ENCODE measurements at regions of chr13 and their contacts with region 1.

Region 1: GRCh38 chr13:46603165-46603603 is 50.2 kb downstream of the LRCH1 start:
- DNase-seq: no peak
- ATAC-seq: no peak
- H3K4me3 Mint-ChIP-seq: no peak overlapping the region
- H3K27ac Mint-ChIP-seq: no peak overlapping the region
- H3K4me1 Mint-ChIP-seq: peaks cover 92% of the 10 kb centered on the region
- H3K27me3 Mint-ChIP-seq: no peaks in the 10 kb centered on the region
- CTCF ChIP-seq: no peak

Region 2: GRCh38 chr13:46614582-46614981 is 11.4 kb after region 1 on chr13:
- CTCF ChIA-PET with region 1: no interaction called
- POLR2A ChIA-PET with region 1: interaction called, 5 read pairs
- intact Hi-C with region 1: loop called (anchors 1 kb)
- DNase-seq: no peak
- ATAC-seq: no peak
- H3K4me3 Mint-ChIP-seq: no peak overlapping the region
- H3K27ac Mint-ChIP-seq: no peak overlapping the region
- H3K4me1 Mint-ChIP-seq: peaks cover 86% of the 10 kb centered on the region
- H3K27me3 Mint-ChIP-seq: no peaks in the 10 kb centered on the region
- CTCF ChIP-seq: no peak

Region 3: DNA sequence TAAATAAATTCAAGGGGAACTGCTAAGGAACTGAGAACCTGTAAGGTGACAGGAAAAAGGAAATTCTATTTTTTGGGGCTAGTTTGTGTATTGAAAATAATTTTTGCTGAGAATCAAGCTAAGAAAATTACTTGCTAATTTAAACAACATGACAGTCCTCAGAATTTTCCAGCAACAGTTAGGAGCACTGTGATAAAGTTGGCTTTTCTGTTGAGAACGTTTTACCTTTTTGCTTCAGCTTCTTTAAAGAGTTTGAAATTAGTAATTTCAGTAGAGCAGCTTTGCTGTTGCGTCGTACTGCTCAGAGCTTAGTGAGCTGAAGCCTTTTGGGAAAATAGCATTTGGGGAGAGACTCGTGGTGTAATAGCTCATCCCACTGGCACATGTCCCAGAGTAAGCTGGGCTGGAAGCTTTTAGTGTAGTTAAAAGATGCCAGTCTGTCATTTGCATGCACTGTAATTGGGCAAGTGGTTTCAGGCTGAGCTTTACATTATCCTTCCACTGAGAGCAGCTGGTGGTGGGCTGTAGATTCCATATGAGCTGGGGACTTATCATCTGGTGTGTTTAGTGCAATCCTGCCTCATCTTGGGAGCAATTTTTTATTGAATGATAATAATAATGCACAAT is 19.6 kb after region 1 on chr13:
- CTCF ChIA-PET with region 1: no interaction called
- POLR2A ChIA-PET with region 1: interaction called, 5 read pairs
- intact Hi-C with region 1: loop called (anchors 1 kb)
- DNase-seq: no peak
- ATAC-seq: no peak
- H3K4me3 Mint-ChIP-seq: peak overlapping the region; percentile 41
- H3K27ac Mint-ChIP-seq: peak overlapping the region; percentile 60
- H3K4me1 Mint-ChIP-seq: peaks cover 94% of the 10 kb centered on the region
- H3K27me3 Mint-ChIP-seq: no peaks in the 10 kb centered on the region
- CTCF ChIP-seq: no peak

Region 4: DNA sequence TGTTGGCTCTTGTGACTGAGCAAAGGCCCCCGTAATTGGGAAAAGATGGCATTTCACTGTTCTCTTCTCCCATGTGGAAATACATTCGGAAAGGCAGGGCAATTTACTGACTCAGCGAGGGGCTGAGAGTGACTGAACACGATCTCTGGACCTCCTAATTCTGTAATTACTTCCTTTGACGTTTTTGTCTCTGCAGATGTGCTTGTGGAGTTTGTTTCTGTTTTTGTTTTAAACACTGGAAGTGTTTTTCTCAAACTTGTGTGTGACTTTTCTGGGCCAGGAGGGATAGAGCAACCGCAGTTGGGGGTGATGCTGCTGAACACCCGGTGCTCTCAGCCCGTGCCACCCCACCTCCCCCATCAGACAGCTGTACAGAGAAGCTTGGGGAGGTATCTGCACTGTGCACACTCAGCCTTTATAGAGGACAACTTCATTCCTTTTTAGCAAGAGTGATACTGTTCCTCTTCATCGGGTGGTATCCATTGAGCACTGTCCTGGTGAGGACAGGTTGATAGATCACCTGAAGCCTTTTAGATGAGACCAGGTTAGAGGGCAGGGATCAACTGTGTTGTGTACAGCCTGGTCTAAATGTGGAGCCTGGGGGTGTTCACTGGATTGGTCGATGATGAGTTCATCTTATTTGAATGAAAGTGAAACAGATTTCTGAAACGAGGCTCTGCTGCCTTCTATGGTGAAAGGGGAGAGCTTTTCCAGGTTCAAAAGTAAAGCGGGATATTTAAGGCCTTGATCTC is 76.4 kb after region 1 on chr13:
- CTCF ChIA-PET with region 1: no interaction called
- POLR2A ChIA-PET with region 1: interaction called, 4 read pairs
- intact Hi-C with region 1: loop called (anchors 5 kb)
- DNase-seq: peak; percentile 20
- ATAC-seq: peak; percentile 90
- H3K4me3 Mint-ChIP-seq: no peak overlapping the region
- H3K27ac Mint-ChIP-seq: no peak overlapping the region
- H3K4me1 Mint-ChIP-seq: peaks cover 29% of the 10 kb centered on the region
- H3K27me3 Mint-ChIP-seq: no peaks in the 10 kb centered on the region
- CTCF ChIP-seq: no peak

Region 5: DNA sequence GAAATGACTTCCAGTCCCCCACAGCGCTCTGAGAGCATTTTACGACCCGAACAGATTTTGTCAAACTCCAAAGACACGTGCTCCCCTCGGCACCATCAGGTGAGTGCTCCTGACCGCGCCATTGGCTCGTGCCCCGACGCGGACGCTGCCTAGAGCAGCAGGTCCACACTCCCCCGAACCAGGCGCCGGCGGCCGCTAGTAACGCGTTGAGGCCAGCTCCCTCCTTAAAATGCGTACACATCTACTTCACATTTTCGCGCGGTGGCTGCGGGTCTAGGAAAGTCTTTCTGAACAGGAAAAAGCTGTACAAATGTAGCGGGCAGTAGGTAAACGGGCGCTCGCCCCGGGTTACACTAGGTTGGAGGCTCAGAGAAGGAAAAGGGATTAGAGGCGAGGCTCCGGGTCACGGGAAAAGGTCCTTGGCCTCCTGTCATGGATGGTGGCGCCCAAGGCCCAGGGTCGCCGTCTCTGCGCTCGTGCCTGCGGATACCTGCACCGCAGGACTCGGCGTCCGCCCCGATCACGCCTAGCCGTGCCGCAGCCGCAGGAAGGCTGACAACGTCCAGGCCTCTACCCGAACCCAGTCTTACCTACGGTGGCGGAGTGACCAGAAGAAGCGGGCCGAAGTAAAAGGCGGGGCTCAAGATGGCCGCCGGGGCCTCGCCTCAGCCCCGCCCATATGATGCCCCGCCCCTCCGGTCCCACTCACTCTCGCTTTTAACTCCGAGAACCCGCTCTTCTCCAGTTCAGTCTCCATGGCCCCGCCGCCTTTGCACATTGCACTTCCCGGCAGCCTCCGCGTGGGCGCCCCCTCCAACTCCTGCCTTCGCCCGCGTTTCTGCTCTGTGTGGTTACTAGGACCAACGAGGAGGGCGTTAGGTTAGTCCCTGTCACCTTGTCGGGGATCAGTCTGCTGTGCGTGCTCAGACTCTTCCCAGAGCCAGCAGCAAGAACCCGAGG is 193.6 kb after region 1 on chr13 and contains the start of gene ESD:
- CTCF ChIA-PET with region 1: no interaction called
- POLR2A ChIA-PET with region 1: no interaction called
- intact Hi-C with region 1: no loop called
- DNase-seq: peak; percentile 86
- ATAC-seq: peak; percentile 95
- H3K4me3 Mint-ChIP-seq: peak within 1 kb of the TSS; percentile 97
- H3K27ac Mint-ChIP-seq: peak within 1 kb of the TSS; percentile 96
- H3K4me1 Mint-ChIP-seq: peaks cover 38% of the 10 kb centered on the region
- H3K27me3 Mint-ChIP-seq: no peaks in the 10 kb centered on the region
- CTCF ChIP-seq: no peak
- total RNA-seq, gene ESD: 73.5 and 74.2 TPM in 2 replicates

Measured in activated B cell treated with CpG ODN at 0.5 μM for 24 hours (primary cell).